ENCODE measurements at regions of chr11 and their contacts with region 1.

Region 1: GRCh38 chr11:59207988-59208451 is 4.7 kb downstream of the MPEG1 start:
- DNase-seq: peak; percentile 39
- H3K4me3 ChIP-seq: no peak overlapping the region
- H3K27me3 ChIP-seq: peaks cover 3% of the 10 kb centered on the region
- CTCF ChIP-seq: peak; percentile 73

Region 2: DNA sequence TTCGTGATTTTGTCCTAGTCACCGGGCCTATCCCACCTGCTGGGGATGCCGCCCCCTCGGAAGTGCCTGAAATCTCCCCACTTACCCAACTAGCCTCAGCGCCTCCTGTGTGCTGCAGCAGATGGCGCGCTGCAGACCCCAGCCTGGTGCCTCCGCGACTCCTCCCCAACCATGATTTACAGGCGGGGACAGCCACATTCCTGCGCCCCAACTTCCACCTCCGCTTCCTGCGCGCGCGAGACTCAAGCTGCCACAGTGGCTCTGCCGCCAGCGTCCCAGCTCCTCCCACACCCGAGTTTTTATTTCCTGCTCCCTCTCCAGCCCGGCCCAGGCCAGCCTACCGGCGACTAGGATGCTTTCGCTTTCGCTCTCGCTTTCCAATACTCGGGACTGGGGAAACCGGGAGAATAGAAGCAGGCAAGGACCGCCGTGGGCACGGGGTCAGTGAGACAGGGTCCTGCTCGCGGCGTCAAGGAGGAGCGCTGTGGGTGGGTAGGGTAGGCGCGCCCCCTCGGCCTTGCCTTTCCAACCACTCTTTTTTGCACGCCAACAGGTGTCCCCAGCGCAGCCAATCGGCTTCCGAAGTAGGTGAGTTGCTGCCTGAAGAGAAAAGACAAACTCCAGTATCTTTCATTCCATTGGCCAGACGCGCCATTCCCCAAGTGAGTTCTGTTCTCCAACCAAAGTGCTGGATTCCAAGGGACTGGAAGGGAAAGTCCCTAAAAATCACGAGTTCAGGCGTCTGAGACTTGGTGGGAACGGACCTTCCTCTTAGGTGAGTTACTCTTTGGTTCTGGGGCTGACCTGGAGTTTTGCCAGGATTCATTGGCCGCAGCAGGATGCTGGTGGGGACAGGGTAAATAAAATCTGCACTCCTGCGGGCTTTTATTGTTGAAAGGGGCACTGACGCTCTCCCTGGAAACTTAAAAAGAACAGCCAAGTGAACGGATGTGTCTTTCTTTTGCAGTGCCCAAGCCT is 65.2 kb before region 1 on chr11 and contains the start of gene FAM111A:
- CTCF ChIA-PET with region 1: no interaction called
- POLR2A ChIA-PET with region 1: no interaction called
- DNase-seq: peak; percentile 35
- H3K4me3 ChIP-seq: peak within 1 kb of the TSS; percentile 98
- H3K27me3 ChIP-seq: no peaks in the 10 kb centered on the region
- CTCF ChIP-seq: peak; percentile 32; the same call in 1 of the 2 replicates
- polyA plus RNA-seq, gene FAM111A: 19.7 and 30.3 TPM in 2 replicates

Region 3: GRCh38 chr11:59186130-59186594 is 21.9 kb before region 1 on chr11:
- CTCF ChIA-PET with region 1: interaction called, 104 read pairs
- POLR2A ChIA-PET with region 1: no interaction called
- DNase-seq: no peak
- H3K4me3 ChIP-seq: no peak overlapping the region
- H3K27me3 ChIP-seq: no peaks in the 10 kb centered on the region; the same call in 1 of the 2 replicates
- CTCF ChIP-seq: peak; percentile 64

Region 4: GRCh38 chr11:59197991-59198390 is 10.0 kb before region 1 on chr11:
- CTCF ChIA-PET with region 1: interaction called, 104 read pairs
- POLR2A ChIA-PET with region 1: no interaction called
- DNase-seq: no peak
- H3K4me3 ChIP-seq: no peak overlapping the region
- H3K27me3 ChIP-seq: no peaks in the 10 kb centered on the region
- CTCF ChIP-seq: no peak